Right ventricle myocardium inferior (tissue), 1 donor: ENCODE measurements at regions of chr2 and their contacts with region 1.

Region 1: GRCh38 chr2:100242891-100243619 is 79.2 kb downstream of the LONRF2 start:
- DNase-seq: peak; percentile 84
- ATAC-seq: peak; percentile 83

Region 2: GRCh38 chr2:99818842-99819241 is 424.2 kb before region 1 on chr2:
- intact Hi-C with region 1: loop called (anchors 5 kb)
- DNase-seq: no peak
- ATAC-seq: no peak

Region 3: DNA sequence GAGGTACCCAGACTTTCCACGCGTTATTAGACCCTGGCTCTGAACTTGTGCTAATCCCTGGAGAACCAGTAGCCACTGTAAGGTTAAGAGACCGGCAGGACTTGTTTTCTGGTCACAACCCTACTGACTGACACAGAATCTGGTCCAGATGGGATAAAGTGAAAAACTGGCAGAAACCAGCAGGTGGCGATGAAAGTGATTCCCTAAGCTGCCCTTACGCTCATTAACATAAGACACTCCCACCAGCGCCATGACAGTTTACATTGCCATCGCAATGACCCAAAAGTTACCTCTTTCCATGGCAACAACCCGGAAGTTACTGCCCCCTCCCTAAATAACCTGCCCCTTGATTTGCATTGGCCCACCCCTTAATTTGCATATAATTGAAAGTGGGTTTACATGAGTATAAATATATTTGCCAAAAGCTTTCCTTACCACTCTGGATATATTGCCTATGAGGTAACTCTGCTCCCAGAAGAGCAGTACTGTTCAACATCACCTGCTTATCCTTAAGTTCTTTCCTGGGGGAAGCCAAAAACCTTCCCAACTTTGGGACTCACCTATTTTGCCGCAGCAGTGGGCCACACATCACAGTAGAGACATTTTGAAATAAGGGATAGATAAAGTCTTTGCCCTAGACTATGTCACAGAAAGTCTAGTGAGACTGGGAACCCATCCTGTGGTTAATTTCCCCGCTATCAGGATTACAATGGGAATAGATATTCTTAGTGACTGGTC is 64.8 kb before region 1 on chr2:
- intact Hi-C with region 1: loop called (anchors 1 kb)
- DNase-seq: no peak
- ATAC-seq: no peak

Region 4: DNA sequence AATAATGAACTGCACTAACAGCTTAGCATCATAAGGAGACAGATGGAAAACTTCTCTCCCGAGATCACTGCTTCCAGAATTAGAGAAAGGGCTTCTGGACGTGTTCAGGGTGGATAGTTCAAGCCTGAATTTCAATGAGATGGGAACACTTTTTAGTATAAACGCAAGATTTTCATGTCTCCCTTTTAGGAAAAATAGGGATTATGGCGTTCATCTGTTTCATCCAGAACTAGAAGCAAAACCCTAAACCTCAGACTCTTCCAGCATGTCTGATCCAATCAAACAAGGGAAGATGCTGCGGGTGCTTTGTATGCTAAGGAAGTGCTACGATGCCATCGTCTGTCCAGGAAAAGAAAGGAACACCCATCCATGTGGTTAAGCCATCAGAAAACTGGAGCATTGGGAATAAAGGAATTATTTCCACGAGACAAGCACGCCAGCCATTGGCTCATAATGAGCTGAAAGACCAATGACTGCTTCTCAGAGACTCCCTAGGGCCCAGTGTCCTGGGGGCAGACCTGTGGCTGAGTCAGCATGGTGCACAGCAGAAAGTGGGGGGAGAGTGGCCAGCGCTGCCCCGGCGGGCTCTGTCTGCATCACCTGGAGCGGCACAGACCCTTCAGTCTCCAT is 34.8 kb before region 1 on chr2:
- intact Hi-C with region 1: no loop called
- DNase-seq: no peak
- ATAC-seq: no peak